Mammary epithelial cell (primary cell): ENCODE measurements at regions of chr16 and their contacts with region 1.

Region 1: DNA sequence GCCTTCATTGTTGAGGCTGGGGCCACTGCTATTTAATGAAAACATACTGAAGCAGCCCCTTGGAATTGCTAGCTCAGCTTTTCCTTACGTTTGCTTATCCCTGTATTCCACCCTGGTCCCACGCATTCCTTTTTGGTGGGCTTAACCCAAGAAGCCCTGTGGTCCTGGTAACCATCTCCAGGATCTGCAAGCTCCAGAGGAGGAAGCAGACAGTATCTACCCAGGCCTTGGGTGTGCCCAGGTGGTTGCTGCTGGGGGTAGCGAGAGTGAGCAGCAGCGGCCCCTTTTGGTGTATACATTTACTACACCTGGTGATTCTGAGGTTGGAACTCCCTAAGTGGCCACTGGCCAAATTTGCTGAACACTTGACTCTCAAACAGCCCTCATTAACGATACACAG is 97.7 kb downstream of the CBLN1 start:
- DNase-seq: peak; percentile 25
- H3K4me3 ChIP-seq: no peak overlapping the region
- H3K27ac ChIP-seq: no peak overlapping the region
- H3K4me1 ChIP-seq: no peaks in the 10 kb centered on the region
- H3K27me3 ChIP-seq: peaks cover 2% of the 10 kb centered on the region
- CTCF ChIP-seq: peak; percentile 56 to 79

Region 2: DNA sequence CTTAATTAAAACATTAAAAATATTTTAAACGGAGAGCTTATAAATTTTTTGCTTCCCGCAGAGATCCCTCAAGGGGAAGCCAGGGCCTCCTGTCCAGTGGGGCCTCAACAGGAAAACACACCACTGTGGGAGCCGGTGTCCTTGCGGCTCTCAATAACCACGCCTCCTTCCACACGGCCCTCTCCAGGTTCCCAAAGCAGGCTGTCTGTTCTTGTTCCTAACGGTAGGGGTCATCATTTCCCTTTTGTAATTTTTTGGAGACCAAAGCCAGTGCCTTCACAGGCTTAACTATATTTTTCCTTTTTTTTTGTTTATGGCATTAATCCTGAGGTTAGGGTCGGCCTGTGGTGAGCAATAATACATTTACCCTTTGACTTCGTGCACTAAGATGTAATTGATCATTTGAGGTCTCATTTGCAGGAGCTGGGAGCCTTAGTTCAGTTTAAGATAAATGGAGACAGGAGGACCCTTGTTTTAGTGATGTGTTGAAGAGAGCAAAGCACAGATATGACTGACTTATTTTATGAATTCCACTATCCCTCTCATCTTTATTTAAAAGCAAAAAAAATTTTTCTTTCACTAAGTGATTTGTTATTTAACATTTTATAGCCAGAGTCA is 496.4 kb before region 1 on chr16:
- CTCF ChIA-PET with region 1: no interaction called
- dilution Hi-C with region 1: no loop called
- in situ Hi-C with region 1: no loop called
- intact Hi-C with region 1: loop called (anchors 1 kb)
- DNase-seq: peak; percentile 60
- H3K4me3 ChIP-seq: no peak overlapping the region
- H3K27ac ChIP-seq: no peak overlapping the region
- H3K4me1 ChIP-seq: no peaks in the 10 kb centered on the region
- H3K27me3 ChIP-seq: no peaks in the 10 kb centered on the region
- CTCF ChIP-seq: peak; percentile 81 to 87

Region 3: GRCh38 chr16:48704710-48705109 is 479.2 kb before region 1 on chr16:
- CTCF ChIA-PET with region 1: no interaction called
- dilution Hi-C with region 1: no loop called
- in situ Hi-C with region 1: loop called in 1 of 2 experiments (anchors 25 kb)
- intact Hi-C with region 1: no loop called
- DNase-seq: no peak
- H3K4me3 ChIP-seq: no peak overlapping the region
- H3K27ac ChIP-seq: no peak overlapping the region
- H3K4me1 ChIP-seq: no peaks in the 10 kb centered on the region
- H3K27me3 ChIP-seq: no peaks in the 10 kb centered on the region
- CTCF ChIP-seq: no peak

Region 4: GRCh38 chr16:48862087-48862532 is 321.8 kb before region 1 on chr16:
- CTCF ChIA-PET with region 1: no interaction called
- dilution Hi-C with region 1: no loop called
- in situ Hi-C with region 1: loop called in 1 of 2 experiments (anchors 25 kb)
- intact Hi-C with region 1: no loop called
- DNase-seq: peak; percentile 77
- H3K4me3 ChIP-seq: no peak overlapping the region
- H3K27ac ChIP-seq: no peak overlapping the region
- H3K4me1 ChIP-seq: no peaks in the 10 kb centered on the region
- H3K27me3 ChIP-seq: no peaks in the 10 kb centered on the region
- CTCF ChIP-seq: peak; percentile 29 to 45

Region 5: DNA sequence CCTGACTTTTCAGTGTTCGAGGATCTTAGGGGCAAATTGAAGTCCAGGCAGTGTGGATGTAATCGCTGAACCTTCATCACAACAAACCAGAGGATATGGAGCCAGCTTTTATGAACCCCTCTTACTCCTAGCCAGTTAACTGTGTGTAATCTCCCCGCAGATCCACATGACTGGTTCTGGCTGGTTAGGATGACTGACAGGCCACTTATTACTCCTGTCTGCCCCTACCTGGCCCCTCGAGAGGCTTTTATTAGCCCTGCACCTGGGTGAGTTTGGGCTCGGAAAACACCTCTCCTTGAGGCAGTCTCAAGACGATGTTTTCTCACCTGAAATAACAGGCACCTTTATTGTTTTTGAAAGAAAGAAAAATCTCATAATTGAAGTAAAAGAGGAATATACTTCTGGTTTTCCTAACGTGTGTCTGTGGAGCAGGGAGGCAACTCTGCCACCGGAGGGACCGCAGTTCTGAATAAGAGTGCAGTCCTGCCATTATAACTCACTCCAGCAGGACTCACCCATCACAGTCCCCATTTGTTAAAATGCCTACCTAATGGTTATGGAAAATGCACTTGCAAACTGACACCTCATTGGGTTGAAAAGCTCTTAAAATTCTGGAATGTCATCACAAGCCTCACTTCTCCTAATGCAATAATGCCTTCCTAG is 282.1 kb before region 1 on chr16:
- CTCF ChIA-PET with region 1: no interaction called
- dilution Hi-C with region 1: no loop called
- in situ Hi-C with region 1: no loop called
- intact Hi-C with region 1: loop called (anchors 1 kb)
- DNase-seq: no peak
- H3K4me3 ChIP-seq: no peak overlapping the region
- H3K27ac ChIP-seq: no peak overlapping the region
- H3K4me1 ChIP-seq: no peaks in the 10 kb centered on the region
- H3K27me3 ChIP-seq: peaks cover 1% of the 10 kb centered on the region
- CTCF ChIP-seq: no peak

Region 6: DNA sequence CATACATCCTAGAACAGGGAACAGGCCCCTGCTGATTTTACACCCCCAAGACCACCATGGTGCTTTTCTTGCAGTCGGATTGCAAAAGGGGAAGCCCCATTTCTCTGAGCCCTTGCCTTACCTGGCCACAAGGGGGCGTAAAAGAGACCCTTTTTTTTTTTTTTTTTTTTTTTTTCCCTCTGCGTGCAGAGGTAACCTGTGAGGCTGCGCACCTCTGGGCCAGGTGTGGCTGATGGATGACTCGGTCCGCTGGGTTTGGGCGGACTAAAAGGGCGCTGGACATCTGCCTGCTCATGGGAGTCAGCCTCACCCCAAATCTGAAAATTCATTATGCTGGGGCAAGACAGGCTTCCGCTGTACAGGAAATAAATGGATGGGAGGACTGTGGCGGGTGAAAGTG is 183.3 kb before region 1 on chr16:
- CTCF ChIA-PET with region 1: no interaction called
- dilution Hi-C with region 1: no loop called
- in situ Hi-C with region 1: no loop called
- intact Hi-C with region 1: loop called (anchors 2 kb)
- DNase-seq: peak; percentile 17
- H3K4me3 ChIP-seq: no peak overlapping the region
- H3K27ac ChIP-seq: no peak overlapping the region
- H3K4me1 ChIP-seq: no peaks in the 10 kb centered on the region
- H3K27me3 ChIP-seq: no peaks in the 10 kb centered on the region
- CTCF ChIP-seq: peak; percentile 64 to 78

Region 7: GRCh38 chr16:49213594-49213993 is 29.7 kb after region 1 on chr16:
- CTCF ChIA-PET with region 1: no interaction called
- dilution Hi-C with region 1: no loop called
- in situ Hi-C with region 1: no loop called
- intact Hi-C with region 1: no loop called
- DNase-seq: no peak
- H3K4me3 ChIP-seq: no peak overlapping the region
- H3K27ac ChIP-seq: no peak overlapping the region
- H3K4me1 ChIP-seq: no peaks in the 10 kb centered on the region
- H3K27me3 ChIP-seq: no peaks in the 10 kb centered on the region
- CTCF ChIP-seq: no peak